ENCODE measurements at regions of chr3 and their contacts with region 1.

Region 1: GRCh38 chr3:190892328-190893011 is 30.0 kb upstream of the GMNC start:
- DNase-seq: no peak
- ATAC-seq: no peak

Region 2: DNA sequence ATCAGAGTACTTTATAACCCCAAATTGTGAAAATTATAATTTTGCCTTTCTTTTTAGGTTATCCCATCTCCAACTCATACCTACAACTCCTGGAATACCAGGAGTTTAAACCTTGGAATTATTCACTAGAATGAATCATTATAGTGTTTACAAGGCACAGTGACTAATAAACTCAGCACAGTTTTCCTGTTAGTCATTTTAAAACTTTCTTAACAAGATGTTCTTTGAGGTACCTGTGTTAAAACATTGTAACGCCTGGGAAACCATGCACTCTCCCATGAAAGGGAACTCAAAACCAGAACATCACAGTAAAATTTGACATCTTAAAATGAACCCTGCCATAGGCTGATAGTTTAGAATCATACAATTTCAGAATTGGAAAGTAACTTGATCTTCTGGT is 174.2 kb after region 1 on chr3:
- intact Hi-C with region 1: loop called (anchors 10 kb)
- DNase-seq: no peak
- ATAC-seq: no peak

Region 3: DNA sequence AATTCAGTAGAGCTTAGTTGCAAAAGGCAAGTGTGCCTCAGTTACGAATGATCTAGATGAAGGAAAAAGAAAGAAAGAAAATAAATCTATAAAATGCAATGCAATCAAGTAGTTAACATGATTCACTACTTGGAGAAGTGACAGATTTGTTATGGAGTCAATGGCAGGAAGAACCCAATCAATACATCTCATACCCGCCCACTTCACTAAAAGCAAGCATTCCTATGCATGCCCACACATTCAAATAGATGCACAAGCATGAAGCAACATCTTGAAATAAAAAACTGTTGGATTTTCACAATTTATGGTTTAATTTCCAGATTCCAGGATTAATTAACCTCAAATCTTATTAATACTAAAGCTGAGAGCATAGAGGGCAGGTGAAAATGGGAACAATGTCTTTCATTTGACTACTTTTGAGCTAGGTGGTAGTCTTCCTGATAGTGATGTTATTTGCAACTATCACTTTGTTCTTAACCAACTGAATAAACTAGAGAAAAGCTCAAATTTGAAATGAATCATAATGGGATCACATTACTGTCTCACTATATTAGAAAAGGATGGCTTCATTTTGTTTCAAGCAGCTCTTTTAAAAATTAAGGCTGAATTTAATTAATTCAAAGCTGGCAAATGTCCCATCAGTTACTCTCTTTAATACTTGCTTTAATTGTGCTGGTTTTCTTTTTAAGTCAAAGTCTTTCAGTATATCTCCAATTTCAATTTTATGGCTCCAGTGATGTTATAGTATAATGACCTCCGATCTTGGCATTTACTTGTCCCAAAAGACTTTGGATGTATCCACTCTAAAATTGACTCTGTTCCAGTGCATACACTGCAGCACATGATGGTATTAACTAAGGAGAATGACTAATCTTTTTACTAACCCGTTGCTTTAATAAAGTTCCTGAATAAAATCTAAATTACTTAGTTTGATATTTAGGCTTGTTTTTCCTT is 390.1 kb after region 1 on chr3:
- intact Hi-C with region 1: no loop called
- DNase-seq: no peak
- ATAC-seq: no peak

Measured in sciatic nerve (tissue), 2 donors.